A549 (cell line): ENCODE measurements at regions of chr15 and their contacts with region 1.

Region 1: GRCh38 chr15:74635228-74635627 is 19.6 kb downstream of the CLK3 start:
- DNase-seq: peak; percentile 54 to 68
- ATAC-seq: peak; percentile 75 to 85
- H3K4me3 ChIP-seq: no peak overlapping the region
- H3K27ac ChIP-seq: no peak overlapping the region; a peak in 1 of 6 replicates
- H3K4me1 ChIP-seq: no peaks in the 10 kb centered on the region
- CTCF ChIP-seq: peak; percentile 72
- EP300 ChIP-seq: no peak
- POLR2A ChIP-seq: no peak
- RAD21 ChIP-seq: peak; percentile 80 to 88

Region 2: DNA sequence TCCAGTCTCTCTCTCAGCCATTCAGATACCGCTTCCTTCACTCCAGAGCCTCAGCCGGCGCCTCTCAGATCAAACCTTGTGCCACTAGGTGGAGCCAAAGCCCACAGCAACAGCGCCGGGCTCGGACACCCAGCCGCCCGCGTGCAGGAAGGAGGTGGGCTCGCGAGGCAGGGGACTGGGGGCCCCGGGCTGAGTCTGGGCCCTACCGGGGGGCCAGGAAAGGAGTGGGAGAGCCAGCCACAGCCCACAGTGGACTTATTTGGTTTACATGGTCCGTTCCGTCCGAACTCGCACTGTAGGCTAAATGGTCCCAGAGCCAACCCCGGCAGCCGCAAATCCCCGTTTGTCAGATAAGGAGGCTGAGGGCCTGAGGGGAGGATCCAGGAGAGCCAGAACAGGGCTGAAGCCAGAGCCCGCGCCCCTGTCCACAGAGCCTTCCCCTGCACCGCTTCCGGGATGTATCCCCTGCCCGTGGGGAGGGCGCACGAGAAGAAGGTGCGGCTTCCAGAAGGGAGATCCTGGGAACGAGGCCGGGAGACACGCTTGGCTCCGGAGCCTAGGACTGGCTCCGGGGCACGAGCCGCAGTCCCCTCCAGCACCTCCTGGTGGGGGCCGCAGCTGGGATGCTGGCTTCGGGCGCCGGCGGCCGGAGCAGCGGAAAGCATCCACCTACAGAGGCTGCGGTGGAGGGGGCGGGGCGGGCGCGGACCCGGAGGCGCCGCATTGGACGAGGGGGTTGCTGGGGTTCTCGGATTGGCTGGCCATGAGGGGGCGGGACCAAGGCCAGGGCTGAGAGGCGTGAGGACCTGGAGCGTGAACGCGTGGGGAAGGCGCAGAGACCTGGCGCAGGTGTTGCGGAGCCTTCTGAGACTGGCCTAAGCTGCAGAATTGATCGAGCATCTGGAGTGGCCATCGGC is 261.2 kb before region 1 on chr15:
- CTCF ChIA-PET with region 1: interaction called, 23 read pairs
- POLR2A ChIA-PET with region 1: no interaction called
- DNase-seq: peak; percentile 81 to 96
- ATAC-seq: peak; percentile 92 to 97
- H3K4me3 ChIP-seq: peak overlapping the region; percentile 44
- H3K27ac ChIP-seq: peak overlapping the region; percentile 51 to 89
- H3K4me1 ChIP-seq: peaks cover 7% of the 10 kb centered on the region
- CTCF ChIP-seq: peak; percentile 79
- EP300 ChIP-seq: no peak
- POLR2A ChIP-seq: no peak
- RAD21 ChIP-seq: peak; percentile 86 to 89

Region 3: GRCh38 chr15:74648166-74648842 is 13.1 kb after region 1 on chr15:
- CTCF ChIA-PET with region 1: interaction called, 60 read pairs
- POLR2A ChIA-PET with region 1: no interaction called
- DNase-seq: no peak
- ATAC-seq: no peak
- H3K4me3 ChIP-seq: no peak overlapping the region
- H3K27ac ChIP-seq: no peak overlapping the region
- H3K4me1 ChIP-seq: no peaks in the 10 kb centered on the region
- CTCF ChIP-seq: no peak
- EP300 ChIP-seq: no peak
- POLR2A ChIP-seq: no peak
- RAD21 ChIP-seq: no peak

Region 4: GRCh38 chr15:74781431-74782258 is 146.4 kb after region 1 on chr15 and contains the start of gene CSK:
- CTCF ChIA-PET with region 1: interaction called, 701 read pairs
- POLR2A ChIA-PET with region 1: no interaction called
- DNase-seq: peak; percentile 67 to 86
- ATAC-seq: peak; percentile 64 to 82
- H3K4me3 ChIP-seq: peak within 1 kb of the TSS; percentile 97
- H3K27ac ChIP-seq: peak within 1 kb of the TSS; percentile 97 to 98
- H3K4me1 ChIP-seq: peaks cover 22% of the 10 kb centered on the region
- CTCF ChIP-seq: peak; percentile 97
- EP300 ChIP-seq: no peak
- POLR2A ChIP-seq: peak; percentile 88
- RAD21 ChIP-seq: no peak
- polyA plus RNA-seq, gene CSK: 17.8 and 22.2 TPM in 2 replicates

Region 5: DNA sequence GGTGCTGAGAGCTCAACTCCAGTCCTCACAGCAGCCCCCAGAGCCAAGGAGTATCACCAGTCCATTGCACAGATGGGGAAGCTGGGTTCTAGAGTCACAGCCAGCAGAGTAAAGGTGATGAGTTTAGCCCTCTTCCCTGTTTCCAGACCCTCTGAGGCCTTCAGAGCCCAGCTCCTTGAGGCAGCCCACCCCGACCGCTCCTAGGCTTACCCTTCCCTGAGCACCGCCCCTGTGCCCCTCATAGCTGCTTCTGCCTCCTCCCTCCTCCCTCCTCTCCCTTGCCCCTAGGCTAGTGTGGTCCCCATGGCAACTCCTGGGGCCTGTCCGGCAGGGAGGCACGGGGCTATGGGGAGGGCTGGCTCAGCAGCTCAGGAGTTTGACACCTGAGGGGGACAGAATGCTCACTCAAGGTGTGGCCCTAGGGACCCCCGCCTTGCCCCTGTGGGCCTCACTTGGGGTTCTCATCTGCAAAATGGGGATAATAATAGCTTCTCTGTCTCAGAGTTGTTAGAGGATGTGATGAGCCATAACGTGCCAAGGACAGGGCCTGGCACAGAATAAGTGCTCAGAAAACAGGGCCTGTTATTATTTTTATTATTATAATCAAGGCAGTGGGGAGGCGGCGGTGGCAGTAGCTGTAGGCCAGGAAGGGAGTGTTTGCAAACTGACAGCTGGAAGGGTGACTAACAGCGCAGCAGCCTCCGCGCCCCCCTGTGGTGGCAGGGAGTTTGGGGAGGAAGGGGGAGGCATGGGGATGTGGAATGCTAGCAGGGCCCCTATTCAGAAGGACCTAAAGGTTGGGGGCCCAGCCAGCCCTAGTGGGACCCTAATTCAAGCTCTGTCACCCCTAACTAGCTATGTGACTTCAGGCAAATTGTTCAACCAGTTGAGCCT is 158.2 kb after region 1 on chr15:
- CTCF ChIA-PET with region 1: interaction called, 24 read pairs
- POLR2A ChIA-PET with region 1: no interaction called
- DNase-seq: no peak
- ATAC-seq: peak in 1 of 2 experiments; percentile 27; a peak in 1 of 6 replicates
- H3K4me3 ChIP-seq: no peak overlapping the region
- H3K27ac ChIP-seq: no peak overlapping the region
- H3K4me1 ChIP-seq: peaks cover 17% of the 10 kb centered on the region; the same call in 1 of the 3 replicates
- CTCF ChIP-seq: no peak
- EP300 ChIP-seq: no peak
- POLR2A ChIP-seq: no peak
- RAD21 ChIP-seq: no peak